ENCODE measurements at regions of chr5 and their contacts with region 1.

Region 1: DNA sequence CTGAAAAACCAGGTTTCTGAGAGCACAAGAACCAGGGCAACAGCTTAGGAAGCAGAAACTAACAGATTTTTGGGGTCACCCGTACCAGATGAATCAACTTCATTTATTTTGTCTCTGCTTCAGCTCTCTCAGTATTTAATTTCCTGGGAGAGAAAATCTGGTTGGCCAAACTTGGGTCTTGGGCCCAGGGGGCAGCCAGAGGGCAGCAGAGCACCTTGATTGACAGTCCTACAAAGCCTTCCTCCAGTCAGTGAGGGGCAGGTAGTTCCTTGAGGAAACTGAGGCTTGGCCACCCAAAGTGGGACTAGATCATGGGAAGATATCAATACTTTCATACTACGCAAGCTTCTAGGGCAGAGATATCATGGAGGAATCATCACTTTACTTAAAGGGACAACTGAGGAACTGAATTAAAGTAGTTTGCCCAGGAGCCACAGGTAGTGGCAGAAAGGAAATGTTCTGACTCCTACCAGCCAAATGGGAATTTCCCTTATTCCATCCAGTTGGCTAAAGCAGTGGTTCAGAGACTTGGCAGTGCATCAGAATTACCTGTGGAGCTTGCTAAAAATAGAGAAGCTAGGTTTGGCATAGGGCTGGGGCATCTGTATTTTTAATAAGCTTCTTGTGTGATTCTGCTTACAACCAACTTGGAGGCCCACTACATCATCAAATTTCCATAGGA is 21.5 kb upstream of the ARHGAP26 start:
- DNase-seq: peak; percentile 67
- H3K4me3 Mint-ChIP-seq: no peak overlapping the region
- H3K27ac Mint-ChIP-seq: no peak overlapping the region
- H3K4me1 Mint-ChIP-seq: peaks cover 8% of the 10 kb centered on the region
- H3K27me3 Mint-ChIP-seq: peaks cover 15% of the 10 kb centered on the region

Region 2: DNA sequence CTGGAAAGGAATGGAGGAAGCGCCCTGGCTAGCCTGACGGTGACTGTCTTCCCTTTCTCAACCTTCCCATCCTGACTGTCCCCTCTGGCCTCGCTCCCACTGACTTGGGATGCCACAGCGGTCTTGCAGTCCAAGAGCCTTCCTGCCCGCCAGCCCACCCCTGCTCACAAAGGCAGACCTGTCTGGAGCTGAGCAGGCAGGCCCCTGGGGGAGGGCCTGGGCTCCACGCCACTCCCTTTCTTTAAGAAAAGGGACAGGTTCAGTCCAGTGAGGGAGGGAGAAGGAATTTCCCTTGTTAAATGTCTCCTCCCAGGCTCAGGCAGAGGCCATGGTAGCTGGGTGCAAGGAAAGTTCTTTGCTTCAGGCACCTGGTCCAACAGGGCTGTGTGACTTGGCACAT is 80.9 kb before region 1 on chr5:
- CTCF ChIA-PET with region 1: no interaction called
- DNase-seq: no peak
- H3K4me3 Mint-ChIP-seq: no peak overlapping the region
- H3K27ac Mint-ChIP-seq: no peak overlapping the region
- H3K4me1 Mint-ChIP-seq: no peaks in the 10 kb centered on the region
- H3K27me3 Mint-ChIP-seq: peaks cover 12% of the 10 kb centered on the region

Region 3: GRCh38 chr5:142720641-142721271 is 28.0 kb before region 1 on chr5:
- CTCF ChIA-PET with region 1: interaction called, 23 read pairs
- DNase-seq: no peak
- H3K4me3 Mint-ChIP-seq: no peak overlapping the region
- H3K27ac Mint-ChIP-seq: no peak overlapping the region
- H3K4me1 Mint-ChIP-seq: no peaks in the 10 kb centered on the region
- H3K27me3 Mint-ChIP-seq: peaks cover 28% of the 10 kb centered on the region

Region 4: GRCh38 chr5:142783601-142784341 is 35.1 kb after region 1 on chr5:
- CTCF ChIA-PET with region 1: interaction called, 13 read pairs
- DNase-seq: peak; percentile 41
- H3K4me3 Mint-ChIP-seq: no peak overlapping the region
- H3K27ac Mint-ChIP-seq: peak overlapping the region; percentile 35
- H3K4me1 Mint-ChIP-seq: peaks cover 51% of the 10 kb centered on the region
- H3K27me3 Mint-ChIP-seq: no peaks in the 10 kb centered on the region

Region 5: DNA sequence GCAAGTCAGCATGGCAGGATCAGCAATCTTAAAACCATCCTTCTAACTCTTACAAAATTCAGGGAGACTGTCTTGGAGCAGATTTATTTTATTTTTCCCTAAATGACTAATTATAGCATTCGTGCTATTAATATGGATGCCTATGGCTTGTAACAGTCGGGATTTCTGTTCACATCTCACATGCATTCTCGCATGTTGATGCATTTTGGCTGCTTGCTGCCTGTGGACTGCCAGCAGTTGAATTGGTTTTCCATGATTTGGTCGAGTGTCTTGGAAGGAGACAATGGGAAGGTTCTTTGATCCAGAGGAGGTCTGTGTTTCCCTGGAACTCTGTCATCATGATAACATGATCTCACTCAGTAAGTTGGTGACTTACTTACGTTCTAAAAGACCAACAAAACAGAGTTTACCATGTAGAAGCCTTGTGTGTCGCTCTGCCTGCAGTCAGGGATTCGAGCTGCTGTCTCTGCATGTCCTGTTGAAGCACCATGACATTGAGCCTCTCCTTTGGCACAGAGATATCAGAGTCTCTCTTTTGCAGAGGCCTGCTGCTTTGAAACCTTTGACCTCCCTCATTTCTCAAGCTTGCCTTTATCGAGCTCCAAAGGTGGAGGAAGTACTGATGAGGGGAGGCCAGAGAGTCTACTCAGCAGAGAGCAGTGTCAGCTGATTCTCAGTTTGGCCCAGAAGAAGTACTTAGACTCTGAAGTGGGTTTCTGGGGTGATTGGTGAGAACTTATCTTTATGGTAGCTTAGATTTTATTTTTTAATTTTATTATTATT is 103.9 kb after region 1 on chr5:
- CTCF ChIA-PET with region 1: interaction called, 12 read pairs
- DNase-seq: no peak
- H3K4me3 Mint-ChIP-seq: no peak overlapping the region
- H3K27ac Mint-ChIP-seq: no peak overlapping the region
- H3K4me1 Mint-ChIP-seq: no peaks in the 10 kb centered on the region
- H3K27me3 Mint-ChIP-seq: no peaks in the 10 kb centered on the region

Region 6: DNA sequence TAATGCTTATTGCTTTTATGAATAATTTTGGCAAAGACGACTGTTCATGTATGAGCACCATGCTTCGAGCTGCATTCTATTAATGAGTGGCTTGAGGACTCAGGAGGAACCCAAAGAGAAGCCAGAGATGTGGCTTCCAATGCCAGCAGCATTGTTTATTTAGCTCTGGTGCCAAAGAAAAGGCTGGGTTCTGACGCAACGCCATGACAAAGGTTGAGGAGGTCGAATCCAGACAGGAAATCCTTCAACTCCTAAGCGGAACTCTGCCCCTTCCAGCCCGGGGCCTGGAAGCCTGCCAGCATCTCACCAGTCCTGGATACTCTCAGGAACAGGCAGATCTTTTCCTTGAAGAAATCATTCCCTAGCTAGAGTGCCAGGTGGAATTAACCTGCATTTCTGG is 125.8 kb after region 1 on chr5:
- CTCF ChIA-PET with region 1: interaction called, 169 read pairs
- DNase-seq: no peak
- H3K4me3 Mint-ChIP-seq: no peak overlapping the region
- H3K27ac Mint-ChIP-seq: no peak overlapping the region
- H3K4me1 Mint-ChIP-seq: no peaks in the 10 kb centered on the region
- H3K27me3 Mint-ChIP-seq: no peaks in the 10 kb centered on the region

Region 7: GRCh38 chr5:142888469-142889085 is 139.9 kb after region 1 on chr5:
- CTCF ChIA-PET with region 1: interaction called, 169 read pairs
- DNase-seq: no peak
- H3K4me3 Mint-ChIP-seq: no peak overlapping the region
- H3K27ac Mint-ChIP-seq: no peak overlapping the region
- H3K4me1 Mint-ChIP-seq: no peaks in the 10 kb centered on the region
- H3K27me3 Mint-ChIP-seq: no peaks in the 10 kb centered on the region

Measured in activated naive CD4-positive, alpha-beta T cell treated with anti-CD3 and anti-CD28 coated beads, Interleukin-2, amount 10 ng/mL, durations not matched to agents 7 days and 5 days (primary cell).